Transverse colon (tissue), 4 donors: ENCODE measurements at regions of chr16 and their contacts with region 1.

Region 1: GRCh38 chr16:3023669-3024478 is at the starts of genes HCFC1R1 and THOC6:
- DNase-seq: peak; percentile 98
- H3K4me3 ChIP-seq: peak within 1 kb of the TSS; percentile 47 to 68 (median 61)
- H3K27ac ChIP-seq: peak within 1 kb of the TSS; percentile 92 to 94 (median 93)
- H3K4me1 ChIP-seq: peaks cover 21 to 61% (median 51%) of the 10 kb centered on the region in 4 donors
- H3K27me3 ChIP-seq: peaks cover 8% of the 10 kb centered on the region
- CTCF ChIP-seq: peak in 1 of 5 experiments; percentile 13
- EP300 ChIP-seq: no peak
- POLR2A ChIP-seq: peak; percentile 80
- total RNA-seq, gene HCFC1R1: 4.4 to 35.4 (median 17.5) TPM
- total RNA-seq, gene THOC6: 10.1 to 42.8 (median 17.6) TPM

Region 2: GRCh38 chr16:2675714-2676113 is 348.2 kb before region 1 on chr16:
- in situ Hi-C with region 1: no loop called
- intact Hi-C with region 1: loop called (anchors 2 kb)
- DNase-seq: no peak
- H3K4me3 ChIP-seq: no peak overlapping the region
- H3K27ac ChIP-seq: no peak overlapping the region
- H3K4me1 ChIP-seq: peaks cover 6 to 36% (median 25%) of the 10 kb centered on the region in 4 donors
- H3K27me3 ChIP-seq: no peaks in the 10 kb centered on the region
- CTCF ChIP-seq: no peak
- EP300 ChIP-seq: no peak
- POLR2A ChIP-seq: no peak

Region 3: GRCh38 chr16:3134564-3135417 is 110.9 kb after region 1 on chr16 and contains the start of gene ZNF213:
- in situ Hi-C with region 1: loop called in 1 of 4 experiments (anchors 25 kb)
- intact Hi-C with region 1: no loop called
- DNase-seq: peak; percentile 97
- H3K4me3 ChIP-seq: peak within 1 kb of the TSS; percentile 76 to 99 (median 92)
- H3K27ac ChIP-seq: peak within 1 kb of the TSS; percentile 96 to 99 (median 99)
- H3K4me1 ChIP-seq: peaks cover 10 to 36% (median 21%) of the 10 kb centered on the region in 4 donors
- H3K27me3 ChIP-seq: no peaks in the 10 kb centered on the region
- CTCF ChIP-seq: peak in 1 of 5 experiments; percentile 12
- EP300 ChIP-seq: no peak
- POLR2A ChIP-seq: peak; percentile 95
- total RNA-seq, gene ZNF213: 12.1 to 64.3 (median 16.1) TPM